Activated CD4-positive, alpha-beta T cell treated with anti-CD3 and anti-CD28 coated beads for 36 hours (primary cell): ENCODE measurements at regions of chr17 and their contacts with region 1.

Region 1: DNA sequence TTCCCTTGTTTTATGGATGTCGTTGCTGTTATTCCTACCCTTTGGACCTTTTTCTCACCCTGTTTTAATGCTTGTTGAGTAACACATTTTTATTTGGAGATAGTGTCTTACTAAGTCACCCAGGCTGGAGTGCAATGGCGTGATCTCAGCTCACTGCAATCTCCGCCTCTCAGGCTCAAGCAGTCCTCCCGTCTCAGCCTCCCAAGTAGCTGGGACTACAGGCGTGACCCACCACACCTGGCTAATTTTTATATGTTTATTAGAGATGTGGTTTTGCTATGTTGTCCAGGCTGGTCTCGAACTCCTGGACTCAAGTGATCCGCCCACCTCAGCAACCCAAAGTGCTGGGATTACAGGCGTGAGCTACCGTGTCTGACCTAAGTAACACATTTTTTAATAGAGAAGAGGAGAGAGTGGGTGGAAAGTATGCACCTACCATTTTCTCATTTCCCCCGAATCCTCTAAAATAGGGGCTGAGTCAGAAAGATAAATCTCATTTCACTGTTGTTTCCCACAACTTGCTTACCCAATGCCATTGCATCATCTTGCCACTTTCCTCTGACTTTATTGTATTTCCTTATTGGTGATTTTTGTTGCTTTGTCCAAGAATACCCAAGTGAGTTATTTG is 7.0 kb downstream of the DHX40 start:
- DNase-seq: peak; percentile 54
- ATAC-seq: peak; percentile 93
- H3K4me3 Mint-ChIP-seq: peak overlapping the region; percentile 31
- H3K27ac Mint-ChIP-seq: peak overlapping the region; percentile 91
- H3K4me1 Mint-ChIP-seq: peaks cover 17% of the 10 kb centered on the region
- H3K27me3 Mint-ChIP-seq: no peaks in the 10 kb centered on the region

Region 2: GRCh38 chr17:59601130-59601529 is 28.7 kb after region 1 on chr17:
- CTCF ChIA-PET with region 1: no interaction called
- POLR2A ChIA-PET with region 1: no interaction called
- intact Hi-C with region 1: loop called in 1 of 2 experiments (anchors 1 kb)
- DNase-seq: peak; percentile 43
- ATAC-seq: peak; percentile 99
- H3K4me3 Mint-ChIP-seq: no peak overlapping the region
- H3K27ac Mint-ChIP-seq: peak overlapping the region; percentile 34
- H3K4me1 Mint-ChIP-seq: peaks cover 11% of the 10 kb centered on the region
- H3K27me3 Mint-ChIP-seq: no peaks in the 10 kb centered on the region

Region 3: DNA sequence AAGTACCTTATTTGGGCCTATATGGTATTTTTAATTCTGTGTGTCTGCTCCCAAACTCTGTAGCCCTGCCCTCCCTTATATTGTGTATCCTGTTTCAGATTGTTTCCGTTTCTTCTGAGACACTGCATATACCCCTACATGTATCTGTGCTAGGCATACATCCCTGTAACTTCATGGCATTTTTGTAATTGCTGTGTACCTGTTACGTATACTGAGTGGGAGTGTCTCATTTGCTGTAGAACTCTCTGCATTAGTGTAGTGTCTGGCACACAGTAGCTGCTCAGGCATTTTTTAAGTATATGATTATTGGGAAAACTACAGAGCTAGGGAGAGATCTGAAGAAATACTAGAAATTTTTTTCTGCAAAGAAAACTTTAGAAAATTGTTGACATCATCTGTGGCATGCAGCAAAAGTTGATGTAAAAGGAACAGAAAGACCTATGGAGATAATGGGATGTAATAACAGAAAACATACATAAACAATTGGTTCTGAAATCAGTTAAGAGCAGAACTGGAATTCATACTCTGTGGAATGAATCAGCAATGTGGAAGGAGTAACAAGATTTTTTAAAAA is 58.8 kb after region 1 on chr17:
- CTCF ChIA-PET with region 1: no interaction called
- POLR2A ChIA-PET with region 1: no interaction called
- intact Hi-C with region 1: no loop called
- DNase-seq: no peak
- ATAC-seq: no peak
- H3K4me3 Mint-ChIP-seq: no peak overlapping the region
- H3K27ac Mint-ChIP-seq: peak overlapping the region; percentile 29
- H3K4me1 Mint-ChIP-seq: peaks cover 79% of the 10 kb centered on the region
- H3K27me3 Mint-ChIP-seq: no peaks in the 10 kb centered on the region